ENCODE measurements at regions of chr6 and their contacts with region 1.

Region 1: DNA sequence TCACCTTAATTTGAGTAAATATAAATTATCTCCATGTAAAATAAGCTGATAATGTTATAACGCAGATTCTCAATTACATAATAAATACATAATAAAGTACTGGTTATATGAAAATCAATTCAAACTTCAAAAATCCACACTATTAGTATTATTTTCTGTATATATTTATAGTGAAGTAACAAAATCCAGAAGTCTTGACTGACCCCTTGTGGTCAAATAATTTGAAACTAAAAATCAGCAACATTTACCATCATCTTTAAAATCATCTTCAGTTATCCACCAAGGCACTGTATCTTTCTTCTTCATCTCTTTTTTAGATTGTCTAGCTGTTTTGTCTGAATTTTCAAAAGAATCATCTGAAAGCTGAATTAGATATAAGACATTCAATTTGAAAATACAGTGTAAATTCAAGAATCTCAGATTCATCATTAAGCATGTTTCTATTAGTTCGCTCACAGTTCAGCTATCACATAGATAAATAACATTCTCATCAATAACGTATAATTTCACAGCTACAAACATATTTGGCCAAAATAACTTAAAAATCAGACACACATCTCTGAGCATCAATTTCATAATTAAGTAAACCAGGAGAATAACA is 6.5 kb downstream of the CEP162 start:
- DNase-seq: no peak
- H3K4me3 Mint-ChIP-seq: no peak overlapping the region
- H3K27ac Mint-ChIP-seq: no peak overlapping the region
- H3K4me1 Mint-ChIP-seq: peaks cover 6% of the 10 kb centered on the region
- H3K27me3 Mint-ChIP-seq: no peaks in the 10 kb centered on the region
- CTCF ChIP-seq: peak; percentile 47

Region 2: GRCh38 chr6:83615025-83615999 is 605.6 kb before region 1 on chr6:
- CTCF ChIA-PET with region 1: no interaction called
- intact Hi-C with region 1: loop called (anchors 1 kb)
- DNase-seq: peak; percentile 13
- H3K4me3 Mint-ChIP-seq: no peak overlapping the region
- H3K27ac Mint-ChIP-seq: no peak overlapping the region
- H3K4me1 Mint-ChIP-seq: no peaks in the 10 kb centered on the region
- H3K27me3 Mint-ChIP-seq: no peaks in the 10 kb centered on the region
- CTCF ChIP-seq: peak; percentile 55

Region 3: DNA sequence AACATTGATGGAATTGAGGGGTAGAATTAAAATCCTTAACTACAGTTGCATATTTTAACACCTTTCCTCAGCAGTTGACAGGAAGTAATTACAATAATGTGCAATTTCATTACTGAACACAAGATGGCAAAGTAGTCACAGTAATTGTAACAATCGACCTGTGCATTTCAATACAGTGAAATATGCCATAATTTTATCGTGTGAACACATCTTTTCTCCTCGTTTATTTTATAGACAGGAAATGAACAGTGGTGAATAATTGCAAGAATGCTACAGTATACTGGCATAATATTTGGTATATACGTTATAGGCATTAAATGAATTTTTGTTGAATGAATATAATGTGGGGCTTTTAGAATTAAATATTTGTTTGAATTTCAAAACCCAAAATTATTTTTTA is 336.4 kb before region 1 on chr6:
- CTCF ChIA-PET with region 1: no interaction called
- intact Hi-C with region 1: loop called (anchors 1 kb)
- DNase-seq: no peak
- H3K4me3 Mint-ChIP-seq: no peak overlapping the region
- H3K27ac Mint-ChIP-seq: no peak overlapping the region
- H3K4me1 Mint-ChIP-seq: no peaks in the 10 kb centered on the region
- H3K27me3 Mint-ChIP-seq: no peaks in the 10 kb centered on the region
- CTCF ChIP-seq: peak; percentile 51

Region 4: GRCh38 chr6:84027340-84028181 is 193.3 kb before region 1 on chr6:
- CTCF ChIA-PET with region 1: no interaction called
- intact Hi-C with region 1: loop called (anchors 10 kb)
- DNase-seq: peak; percentile 24
- H3K4me3 Mint-ChIP-seq: peak overlapping the region; percentile 32
- H3K27ac Mint-ChIP-seq: peak overlapping the region; percentile 63
- H3K4me1 Mint-ChIP-seq: peaks cover 27% of the 10 kb centered on the region
- H3K27me3 Mint-ChIP-seq: no peaks in the 10 kb centered on the region
- CTCF ChIP-seq: no peak

Region 5: GRCh38 chr6:84119253-84119652 is 101.7 kb before region 1 on chr6:
- CTCF ChIA-PET with region 1: no interaction called
- intact Hi-C with region 1: no loop called
- DNase-seq: no peak
- H3K4me3 Mint-ChIP-seq: no peak overlapping the region
- H3K27ac Mint-ChIP-seq: no peak overlapping the region
- H3K4me1 Mint-ChIP-seq: no peaks in the 10 kb centered on the region
- H3K27me3 Mint-ChIP-seq: no peaks in the 10 kb centered on the region
- CTCF ChIP-seq: no peak